Activated CD4-positive, alpha-beta T cell treated with anti-CD3 and anti-CD28 coated beads for 36 hours (primary cell): ENCODE measurements at regions of chr1 and their contacts with region 1.

Region 1: DNA sequence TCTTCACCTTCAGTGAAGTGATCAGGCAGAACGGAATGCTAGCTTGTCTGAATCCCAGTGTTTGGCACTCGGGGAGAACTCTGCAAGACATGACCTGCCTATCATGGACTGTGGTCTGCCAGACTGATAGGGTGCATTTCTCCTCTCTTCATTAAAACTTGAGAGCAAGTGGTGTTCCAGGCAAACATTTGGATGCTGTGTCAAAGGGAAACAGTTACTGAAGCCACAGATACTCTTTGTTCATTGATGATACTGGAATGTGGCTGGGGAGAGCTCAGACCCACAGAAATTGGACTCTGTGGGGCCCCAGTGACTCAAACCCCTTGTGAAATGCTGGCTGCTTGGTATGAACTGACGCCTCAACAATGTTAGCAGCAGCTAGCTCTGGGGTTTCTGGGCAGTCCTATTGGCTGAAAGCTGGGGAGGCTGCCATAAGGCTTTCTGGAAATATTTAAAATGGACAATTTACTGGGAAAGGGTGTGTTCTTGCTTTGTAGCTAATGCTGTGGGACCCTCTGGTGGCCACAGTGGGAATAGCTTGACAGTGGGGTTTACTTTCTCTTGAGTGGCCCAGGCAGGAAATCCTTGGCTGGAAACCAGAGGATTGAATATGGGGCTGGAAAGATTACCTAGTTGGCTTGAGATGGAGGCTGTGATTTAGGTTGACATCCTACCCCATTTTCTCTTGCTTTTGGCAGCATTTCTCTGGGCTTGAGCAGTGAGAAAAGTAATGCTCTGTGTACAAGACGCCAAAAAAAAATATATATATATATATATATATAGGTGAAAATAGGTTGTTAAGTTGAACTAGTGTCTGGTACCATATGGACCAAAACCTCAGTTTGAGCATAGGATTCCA is 8.0 kb upstream of the S100A10 start:
- DNase-seq: peak; percentile 85
- ATAC-seq: peak; percentile 83
- H3K4me3 Mint-ChIP-seq: no peak overlapping the region
- H3K27ac Mint-ChIP-seq: no peak overlapping the region
- H3K4me1 Mint-ChIP-seq: peaks cover 7% of the 10 kb centered on the region
- H3K27me3 Mint-ChIP-seq: peaks cover 2% of the 10 kb centered on the region

Region 2: GRCh38 chr1:151661751-151662150 is 339.9 kb before region 1 on chr1:
- CTCF ChIA-PET with region 1: no interaction called
- POLR2A ChIA-PET with region 1: no interaction called
- intact Hi-C with region 1: no loop called
- DNase-seq: no peak
- ATAC-seq: no peak
- H3K4me3 Mint-ChIP-seq: no peak overlapping the region
- H3K27ac Mint-ChIP-seq: peak overlapping the region; percentile 32
- H3K4me1 Mint-ChIP-seq: peaks cover 11% of the 10 kb centered on the region
- H3K27me3 Mint-ChIP-seq: no peaks in the 10 kb centered on the region

Region 3: DNA sequence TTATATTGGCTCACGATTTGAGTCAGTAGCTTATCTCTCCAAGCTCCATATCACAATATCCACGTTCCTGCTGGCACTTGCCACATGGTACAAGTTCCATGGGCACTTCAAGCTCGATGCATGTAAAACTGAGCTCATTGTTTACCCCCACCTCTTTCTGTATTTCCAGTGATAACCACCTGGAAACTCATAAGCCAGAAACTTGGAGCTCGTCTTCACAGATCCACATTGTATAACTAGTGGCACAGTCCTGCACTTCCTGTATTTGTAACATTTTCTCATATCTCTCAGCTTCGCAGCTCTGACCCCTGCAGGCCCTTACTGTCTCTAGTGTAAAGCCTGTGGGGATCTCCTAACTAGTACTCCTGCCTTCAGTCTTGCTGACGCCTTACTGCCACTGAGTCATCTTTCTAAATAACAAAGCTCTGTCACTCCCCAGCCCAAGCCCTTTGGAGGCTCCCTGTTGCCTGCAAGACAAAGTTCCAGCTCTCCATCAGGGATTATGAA is 155.5 kb before region 1 on chr1:
- CTCF ChIA-PET with region 1: interaction called, 18 read pairs
- POLR2A ChIA-PET with region 1: no interaction called
- intact Hi-C with region 1: loop called in 1 of 2 experiments (anchors 5 kb)
- DNase-seq: peak; percentile 65
- ATAC-seq: peak; percentile 80
- H3K4me3 Mint-ChIP-seq: peak overlapping the region; percentile 0
- H3K27ac Mint-ChIP-seq: peak overlapping the region; percentile 78
- H3K4me1 Mint-ChIP-seq: peaks cover 34% of the 10 kb centered on the region
- H3K27me3 Mint-ChIP-seq: no peaks in the 10 kb centered on the region

Region 4: GRCh38 chr1:151909150-151910149 is 92.2 kb before region 1 on chr1 and contains the start of gene THEM4:
- CTCF ChIA-PET with region 1: interaction called, 10 read pairs
- POLR2A ChIA-PET with region 1: no interaction called
- intact Hi-C with region 1: no loop called
- DNase-seq: peak; percentile 98
- ATAC-seq: peak; percentile 93
- H3K4me3 Mint-ChIP-seq: peak within 1 kb of the TSS; percentile 82
- H3K27ac Mint-ChIP-seq: peak within 1 kb of the TSS; percentile 91
- H3K4me1 Mint-ChIP-seq: peaks cover 42% of the 10 kb centered on the region
- H3K27me3 Mint-ChIP-seq: no peaks in the 10 kb centered on the region
- total RNA-seq, gene THEM4: 23.9 to 26.0 TPM

Region 5: DNA sequence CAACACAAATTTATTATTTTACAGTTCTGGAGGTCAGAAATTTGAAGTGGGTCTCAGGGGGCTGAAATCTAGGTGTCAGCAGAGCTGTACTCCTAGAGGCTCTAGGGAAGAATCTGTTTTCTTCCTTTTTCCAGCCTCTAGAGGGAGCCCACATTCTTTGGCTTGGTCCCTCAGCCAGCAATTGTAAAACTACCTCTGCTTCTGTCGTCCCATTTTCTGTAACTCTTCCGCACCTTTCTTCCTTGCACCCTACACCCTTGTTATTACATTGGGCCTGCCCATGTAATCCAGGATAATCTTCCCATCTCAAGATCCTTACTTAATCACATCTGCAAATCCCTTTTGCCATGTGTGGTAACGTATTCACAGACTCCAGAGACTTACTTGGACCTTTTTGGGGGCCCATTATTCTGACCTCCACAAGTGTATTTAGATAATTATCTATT is 67.5 kb before region 1 on chr1:
- CTCF ChIA-PET with region 1: interaction called, 266 read pairs
- POLR2A ChIA-PET with region 1: no interaction called
- intact Hi-C with region 1: loop called (anchors 1 kb)
- DNase-seq: peak; percentile 63
- ATAC-seq: peak; percentile 90
- H3K4me3 Mint-ChIP-seq: no peak overlapping the region
- H3K27ac Mint-ChIP-seq: no peak overlapping the region
- H3K4me1 Mint-ChIP-seq: peaks cover 2% of the 10 kb centered on the region
- H3K27me3 Mint-ChIP-seq: no peaks in the 10 kb centered on the region

Region 6: GRCh38 chr1:151945725-151946364 is 55.8 kb before region 1 on chr1:
- CTCF ChIA-PET with region 1: interaction called, 266 read pairs
- POLR2A ChIA-PET with region 1: interaction called, 13 read pairs
- intact Hi-C with region 1: no loop called
- DNase-seq: peak; percentile 82
- ATAC-seq: peak; percentile 45
- H3K4me3 Mint-ChIP-seq: peak overlapping the region; percentile 42
- H3K27ac Mint-ChIP-seq: peak overlapping the region; percentile 88
- H3K4me1 Mint-ChIP-seq: peaks cover 42% of the 10 kb centered on the region
- H3K27me3 Mint-ChIP-seq: no peaks in the 10 kb centered on the region

Region 7: GRCh38 chr1:151976858-151977257 is 24.8 kb before region 1 on chr1:
- CTCF ChIA-PET with region 1: interaction called, 172 read pairs
- POLR2A ChIA-PET with region 1: interaction called, 3 read pairs
- intact Hi-C with region 1: no loop called
- DNase-seq: no peak
- ATAC-seq: no peak
- H3K4me3 Mint-ChIP-seq: no peak overlapping the region
- H3K27ac Mint-ChIP-seq: no peak overlapping the region
- H3K4me1 Mint-ChIP-seq: peaks cover 20% of the 10 kb centered on the region
- H3K27me3 Mint-ChIP-seq: no peaks in the 10 kb centered on the region

Region 8: GRCh38 chr1:152034646-152035405 is 33.2 kb after region 1 on chr1:
- CTCF ChIA-PET with region 1: interaction called, 17 read pairs
- POLR2A ChIA-PET with region 1: interaction called, 3 read pairs
- intact Hi-C with region 1: no loop called
- DNase-seq: peak; percentile 82
- ATAC-seq: peak; percentile 64
- H3K4me3 Mint-ChIP-seq: peak overlapping the region; percentile 82
- H3K27ac Mint-ChIP-seq: peak overlapping the region; percentile 90
- H3K4me1 Mint-ChIP-seq: peaks cover 41% of the 10 kb centered on the region
- H3K27me3 Mint-ChIP-seq: no peaks in the 10 kb centered on the region